OCI-LY7 (cell line): ENCODE measurements at regions of chr20 and their contacts with region 1.

Region 1: DNA sequence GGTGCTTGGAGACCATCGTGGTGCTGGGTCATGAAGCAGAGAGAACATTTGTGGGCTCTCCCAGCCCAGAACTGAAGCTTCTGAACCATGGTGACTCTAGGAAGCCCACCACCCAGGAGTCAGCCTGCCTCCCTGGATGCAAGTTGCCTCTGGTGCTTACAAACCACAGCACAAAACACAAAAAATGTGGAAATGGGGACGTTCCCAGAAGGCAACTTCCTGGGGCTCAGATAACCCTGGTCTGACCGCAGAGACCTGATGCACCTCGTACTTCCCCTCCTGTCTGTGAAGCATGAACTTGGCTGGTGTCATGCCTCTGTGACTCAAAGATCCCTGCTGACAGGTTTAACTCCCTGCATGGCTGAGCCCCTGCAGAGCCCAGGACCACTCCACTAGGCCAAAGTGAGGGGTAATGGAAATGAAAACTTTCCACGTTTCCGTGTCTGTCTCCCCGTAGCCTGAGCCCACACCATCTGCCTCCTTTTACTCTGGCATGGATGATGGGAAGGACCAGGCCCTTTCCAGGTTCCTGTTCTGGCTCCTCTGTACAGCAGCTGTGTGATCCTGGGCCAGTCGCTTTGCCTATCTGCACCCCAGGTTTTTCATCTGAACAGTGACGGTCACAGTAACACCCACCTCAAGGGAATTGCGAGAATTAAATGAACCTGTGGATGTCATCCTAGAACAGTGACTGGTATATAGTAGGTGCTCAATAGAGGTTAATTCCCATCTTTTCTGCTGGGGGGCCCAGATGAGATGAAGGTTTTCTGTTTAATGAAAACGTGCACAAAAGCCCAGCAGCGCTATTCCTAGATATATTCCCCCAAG is 57.7 kb downstream of the PPP1R16B start:
- DNase-seq: peak; percentile 87
- H3K4me3 ChIP-seq: peak overlapping the region; percentile 27
- H3K27ac ChIP-seq: peak overlapping the region; percentile 86
- H3K4me1 ChIP-seq: peaks cover 95% of the 10 kb centered on the region
- CTCF ChIP-seq: no peak

Region 2: DNA sequence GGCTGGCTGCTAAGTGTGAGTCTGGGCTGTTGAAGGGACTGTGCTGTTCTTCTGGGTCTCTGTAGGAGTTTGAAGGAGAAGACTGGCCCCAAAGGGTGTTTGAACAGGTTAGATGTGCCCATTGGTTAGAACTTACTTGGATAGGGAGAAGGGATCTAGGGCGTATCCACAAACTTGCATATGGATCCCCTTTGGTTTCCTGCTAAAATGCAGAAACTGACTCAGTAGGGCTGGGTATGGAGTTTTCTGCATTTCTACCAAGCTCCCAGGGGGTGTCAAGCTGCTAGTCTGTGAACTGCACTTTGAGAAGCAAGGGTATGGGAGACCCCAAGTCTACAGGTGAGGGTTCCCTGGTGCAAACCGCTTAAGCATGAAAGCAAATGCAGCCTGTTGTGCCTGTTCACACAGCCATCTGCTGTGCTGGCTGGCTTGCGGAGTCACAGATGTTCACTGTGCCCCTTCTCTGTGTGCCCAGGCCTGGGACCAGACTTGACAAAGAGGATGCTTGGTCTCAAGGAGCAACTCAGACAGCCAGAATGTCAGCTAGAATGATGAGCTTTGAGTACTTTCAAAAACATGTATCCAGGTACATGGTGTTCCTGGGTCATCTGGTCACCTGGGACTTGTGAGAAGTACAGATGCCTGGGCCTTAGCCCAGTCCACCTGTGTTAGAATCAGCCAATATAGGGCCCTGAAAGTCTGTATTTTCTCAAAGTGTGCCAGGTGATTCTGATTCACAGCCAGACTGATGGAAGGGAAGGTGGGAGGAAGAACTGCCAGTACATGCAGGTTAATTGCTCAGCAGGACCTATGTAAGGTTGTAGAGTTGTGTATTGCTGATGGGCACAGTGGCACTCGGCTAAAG is 50.3 kb before region 1 on chr20:
- CTCF ChIA-PET with region 1: no interaction called
- POLR2A ChIA-PET with region 1: no interaction called
- intact Hi-C with region 1: no loop called
- DNase-seq: peak; percentile 55
- H3K4me3 ChIP-seq: no peak overlapping the region
- H3K27ac ChIP-seq: peak overlapping the region; percentile 42
- H3K4me1 ChIP-seq: peaks cover 68% of the 10 kb centered on the region
- CTCF ChIP-seq: no peak

Region 3: GRCh38 chr20:38875175-38875993 is 12.1 kb after region 1 on chr20:
- CTCF ChIA-PET with region 1: interaction called, 12 read pairs
- POLR2A ChIA-PET with region 1: interaction called, 12 read pairs
- intact Hi-C with region 1: loop called (anchors 1 kb)
- DNase-seq: peak; percentile 97
- H3K4me3 ChIP-seq: peak overlapping the region; percentile 54
- H3K27ac ChIP-seq: peak overlapping the region; percentile 97
- H3K4me1 ChIP-seq: peaks cover 96% of the 10 kb centered on the region
- CTCF ChIP-seq: no peak; the same call in 1 of the 2 replicates

Region 4: DNA sequence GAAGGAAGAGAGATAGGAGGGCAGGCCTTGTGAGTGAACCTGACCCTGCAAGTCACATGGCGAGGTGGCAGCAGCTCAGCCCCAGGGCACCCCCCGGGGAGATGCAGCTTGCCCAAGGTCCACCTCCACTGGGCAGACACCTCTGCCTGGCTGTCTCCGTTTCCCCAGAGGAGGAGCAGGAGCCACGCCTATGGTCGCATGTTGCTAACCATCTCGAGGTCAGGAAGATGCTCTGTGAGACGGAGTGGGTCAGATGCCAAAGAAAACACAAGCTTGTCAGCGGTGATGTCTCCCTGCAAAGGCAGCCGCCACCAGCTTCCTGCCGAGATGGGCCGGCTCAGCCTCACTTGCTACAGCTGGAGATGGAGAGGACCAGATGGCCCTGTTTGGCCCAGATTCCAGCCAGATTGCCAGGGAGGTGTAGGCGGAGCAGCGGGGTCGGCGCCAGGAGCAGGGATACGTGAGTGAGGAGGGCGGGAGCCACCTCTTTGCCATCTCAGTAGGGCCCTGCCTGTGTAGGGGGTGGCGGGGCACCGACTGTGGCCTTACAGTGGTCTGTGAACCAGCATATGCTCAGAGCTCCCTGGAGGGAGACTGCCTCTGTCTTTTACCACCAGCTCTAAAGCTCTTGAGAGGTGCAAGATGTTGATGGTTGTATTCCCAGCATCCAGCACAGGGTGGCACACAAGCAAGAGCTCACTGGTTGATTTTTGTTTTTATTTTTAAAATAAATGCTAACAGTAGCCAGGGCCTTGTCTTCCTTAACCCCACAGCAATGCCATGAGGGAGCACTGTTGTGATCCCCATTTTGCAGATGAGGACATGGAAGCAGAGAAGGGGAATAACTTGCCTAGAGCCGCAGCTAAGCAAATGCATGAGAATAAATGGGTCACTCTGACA is 20.1 kb after region 1 on chr20:
- CTCF ChIA-PET with region 1: interaction called, 4 read pairs
- POLR2A ChIA-PET with region 1: interaction called, 14 read pairs
- intact Hi-C with region 1: no loop called
- DNase-seq: peak; percentile 63
- H3K4me3 ChIP-seq: peak overlapping the region; percentile 36
- H3K27ac ChIP-seq: peak overlapping the region; percentile 97
- H3K4me1 ChIP-seq: peaks cover 81% of the 10 kb centered on the region
- CTCF ChIP-seq: peak; percentile 63

Region 5: GRCh38 chr20:38973645-38974044 is 110.4 kb after region 1 on chr20:
- CTCF ChIA-PET with region 1: no interaction called
- POLR2A ChIA-PET with region 1: no interaction called
- intact Hi-C with region 1: no loop called
- DNase-seq: no peak
- H3K4me3 ChIP-seq: no peak overlapping the region
- H3K27ac ChIP-seq: no peak overlapping the region
- H3K4me1 ChIP-seq: no peaks in the 10 kb centered on the region
- CTCF ChIP-seq: no peak